Right cardiac atrium (tissue), 5 donors: ENCODE measurements at regions of chr1 and their contacts with region 1.

Region 1: DNA sequence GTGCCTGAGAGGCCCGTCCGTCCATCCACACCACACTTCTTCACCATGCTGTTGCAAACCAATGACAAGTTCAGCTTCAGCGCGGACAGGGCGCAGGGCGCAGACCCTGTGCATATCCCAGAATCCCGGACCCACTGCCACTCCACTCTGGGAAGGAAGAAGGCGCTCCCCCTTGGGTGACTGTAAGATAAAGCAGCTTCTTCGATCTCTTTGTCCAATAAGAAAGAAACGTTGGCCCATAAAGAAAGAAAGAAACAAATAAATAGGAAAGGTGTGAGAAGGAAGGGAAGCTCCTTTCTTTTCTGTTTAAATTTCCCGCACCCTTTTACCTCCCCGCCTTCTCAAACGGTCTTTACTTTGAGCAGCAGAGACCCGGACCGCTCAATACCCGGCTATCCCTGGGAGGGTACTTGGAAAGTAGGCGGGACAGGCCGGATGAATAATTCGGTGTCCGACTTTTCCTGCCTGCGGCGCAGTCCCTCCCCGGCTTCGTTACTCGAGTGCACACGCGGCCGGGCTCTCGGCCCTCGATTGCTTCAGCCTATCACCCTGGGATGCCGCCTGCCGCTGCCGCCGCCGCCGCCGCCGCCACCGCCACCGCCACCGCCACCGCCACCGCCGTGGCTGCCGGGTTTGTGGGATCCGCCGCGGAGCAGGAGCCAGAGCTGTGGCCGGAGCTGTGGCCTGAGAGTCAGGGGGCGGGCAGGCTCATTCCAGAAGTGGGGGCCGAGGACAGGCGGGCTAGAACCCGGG is 523 bp upstream of the RASAL2 start:
- DNase-seq: peak; percentile 94 to 96 (median 96)
- ATAC-seq: peak; percentile 88 to 92
- H3K4me3 ChIP-seq: peak overlapping the region; percentile 94
- H3K27ac ChIP-seq: peak overlapping the region; percentile 97
- H3K4me1 ChIP-seq: no peaks in the 10 kb centered on the region
- H3K27me3 ChIP-seq: no peaks in the 10 kb centered on the region

Region 2: DNA sequence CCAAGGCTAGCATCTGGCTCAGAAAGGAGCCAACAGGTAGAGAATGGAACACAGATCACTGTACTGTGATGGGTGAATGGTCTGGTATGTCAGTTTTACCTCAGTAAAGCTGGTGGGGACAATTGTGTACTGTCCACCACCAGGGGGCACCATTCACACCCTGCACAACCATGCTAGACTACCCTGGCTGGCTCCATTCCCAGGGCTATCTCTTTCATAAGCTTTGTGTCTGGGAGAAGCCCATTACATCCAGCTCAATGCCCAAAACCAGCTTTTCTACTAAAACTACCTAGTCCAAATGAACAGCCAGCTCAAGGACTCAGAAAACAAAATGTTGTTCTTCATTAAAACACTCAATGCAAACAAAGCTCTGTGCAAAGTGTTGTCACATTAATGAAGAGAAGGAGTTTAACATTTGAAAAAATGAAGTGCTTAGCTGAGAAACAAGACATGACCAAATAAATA is 61.5 kb before region 1 on chr1:
- intact Hi-C with region 1: loop called in 2 of 4 experiments (anchors 2 to 10 kb)
- DNase-seq: peak; percentile 91 to 95 (median 92)
- ATAC-seq: peak; percentile 88 to 90
- H3K4me3 ChIP-seq: no peak overlapping the region
- H3K27ac ChIP-seq: no peak overlapping the region
- H3K4me1 ChIP-seq: no peaks in the 10 kb centered on the region
- H3K27me3 ChIP-seq: no peaks in the 10 kb centered on the region

Region 3: GRCh38 chr1:178055779-178056471 is 37.5 kb before region 1 on chr1:
- intact Hi-C with region 1: loop called in 1 of 4 experiments (anchors 5 kb)
- DNase-seq: peak in 2 of 3 donors; percentile 51 to 60
- ATAC-seq: peak; percentile 36 to 43
- H3K4me3 ChIP-seq: no peak overlapping the region
- H3K27ac ChIP-seq: peak overlapping the region; percentile 81
- H3K4me1 ChIP-seq: peaks cover 28% of the 10 kb centered on the region
- H3K27me3 ChIP-seq: no peaks in the 10 kb centered on the region

Region 4: GRCh38 chr1:178189814-178190213 is 96.4 kb after region 1 on chr1:
- intact Hi-C with region 1: loop called in 1 of 4 experiments (anchors 10 kb)
- DNase-seq: peak in 2 of 3 donors; percentile 20 to 56
- ATAC-seq: peak; percentile 64 to 70
- H3K4me3 ChIP-seq: no peak overlapping the region
- H3K27ac ChIP-seq: no peak overlapping the region
- H3K4me1 ChIP-seq: peaks cover 3% of the 10 kb centered on the region
- H3K27me3 ChIP-seq: no peaks in the 10 kb centered on the region

Region 5: DNA sequence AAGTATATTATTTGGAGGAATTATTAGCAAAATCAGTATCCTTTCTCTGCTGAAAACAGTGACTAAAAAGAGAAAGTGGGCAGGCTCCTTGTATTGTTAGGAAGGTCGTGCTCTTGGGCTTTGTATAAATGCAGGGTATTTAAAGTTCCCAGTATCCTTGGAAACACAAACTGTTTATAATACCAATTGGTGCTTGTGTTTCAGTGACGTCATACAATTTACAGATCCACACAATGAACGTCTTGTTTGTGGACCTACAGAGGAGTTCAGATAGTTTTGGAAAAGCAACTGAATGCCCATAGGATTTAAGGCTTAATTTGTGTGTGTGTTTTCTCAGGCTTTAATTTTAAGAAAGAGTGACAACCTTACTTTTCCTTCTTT is 168.7 kb after region 1 on chr1:
- intact Hi-C with region 1: loop called in 2 of 4 experiments (anchors 10 kb)
- DNase-seq: no peak
- ATAC-seq: peak in 1 of 2 donors; percentile 35
- H3K4me3 ChIP-seq: no peak overlapping the region
- H3K27ac ChIP-seq: no peak overlapping the region
- H3K4me1 ChIP-seq: peaks cover 3% of the 10 kb centered on the region
- H3K27me3 ChIP-seq: no peaks in the 10 kb centered on the region